ENCODE measurements at regions of chr1 and their contacts with region 1.

Region 1: GRCh38 chr1:93814059-93814794 is 64.8 kb downstream of the DNTTIP2 start:
- DNase-seq: peak; percentile 40
- ATAC-seq: peak; percentile 92
- H3K4me3 ChIP-seq: no peak overlapping the region
- H3K27ac ChIP-seq: no peak overlapping the region
- H3K4me1 ChIP-seq: peaks cover 8% of the 10 kb centered on the region
- H3K27me3 ChIP-seq: no peaks in the 10 kb centered on the region; a peak in 1 of 4 replicates
- CTCF ChIP-seq: peak; percentile 97 to 99 (median 97); a peak in 5 of 6 replicates
- EP300 ChIP-seq: no peak
- POLR2A ChIP-seq: no peak
- RAD21 ChIP-seq: peak; percentile 100

Region 2: DNA sequence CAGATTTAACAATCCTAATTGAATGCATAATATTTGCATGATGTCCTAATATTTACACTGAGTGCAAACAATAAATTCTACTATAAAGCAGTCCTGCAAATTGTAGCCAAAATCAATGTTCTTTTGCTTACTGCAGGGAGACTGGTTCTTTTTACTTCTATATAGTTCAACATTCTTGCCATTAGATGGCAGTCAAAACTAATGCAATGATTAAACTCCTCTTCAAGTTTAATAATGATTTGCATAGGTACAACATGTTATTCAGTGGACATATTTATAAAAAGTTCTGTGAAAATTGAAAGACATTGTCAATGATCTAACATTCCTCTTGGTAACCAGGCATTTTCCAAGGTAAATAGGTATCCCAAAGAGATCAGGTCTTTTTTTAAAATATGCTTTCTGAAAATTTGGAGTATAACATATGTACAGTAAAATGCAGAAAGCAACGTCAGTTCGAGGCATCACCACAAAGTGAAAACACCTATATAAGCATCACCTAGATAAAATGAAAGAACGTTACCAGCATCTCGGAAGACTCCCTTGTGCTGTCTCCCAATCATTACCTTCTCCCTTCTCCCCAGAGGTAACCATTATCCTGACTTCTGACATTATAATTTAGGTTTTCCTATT is 376.1 kb before region 1 on chr1:
- CTCF ChIA-PET with region 1: interaction called, 15 read pairs
- POLR2A ChIA-PET with region 1: no interaction called
- RAD21 ChIA-PET with region 1: interaction called, 3 read pairs
- SMC1A ChIA-PET with region 1: interaction called, 9 read pairs
- in situ Hi-C with region 1: no loop called
- intact Hi-C with region 1: loop called (anchors 2 kb)
- DNase-seq: no peak
- ATAC-seq: peak; percentile 74
- H3K4me3 ChIP-seq: no peak overlapping the region
- H3K27ac ChIP-seq: no peak overlapping the region
- H3K4me1 ChIP-seq: no peaks in the 10 kb centered on the region
- H3K27me3 ChIP-seq: peaks cover 0 to 2% of the 10 kb centered on the region in 2 experiments; a peak in 2 of 4 replicates
- CTCF ChIP-seq: peak; percentile 30 to 61 (median 46); a peak in 5 of 6 replicates
- EP300 ChIP-seq: no peak
- POLR2A ChIP-seq: no peak
- RAD21 ChIP-seq: peak; percentile 76

Region 3: GRCh38 chr1:93638981-93639380 is 175.2 kb before region 1 on chr1:
- CTCF ChIA-PET with region 1: interaction called, 555 read pairs
- POLR2A ChIA-PET with region 1: no interaction called
- RAD21 ChIA-PET with region 1: interaction called, 483 read pairs
- SMC1A ChIA-PET with region 1: interaction called, 505 read pairs
- in situ Hi-C with region 1: no loop called
- intact Hi-C with region 1: no loop called
- DNase-seq: no peak
- ATAC-seq: no peak
- H3K4me3 ChIP-seq: no peak overlapping the region
- H3K27ac ChIP-seq: no peak overlapping the region
- H3K4me1 ChIP-seq: 0 out of 2 replicates have a peak, but pooled peaks cover 3% of the 10 kb centered on the region
- H3K27me3 ChIP-seq: no peaks in the 10 kb centered on the region
- CTCF ChIP-seq: no peak
- EP300 ChIP-seq: no peak
- POLR2A ChIP-seq: no peak
- RAD21 ChIP-seq: no peak

Region 4: GRCh38 chr1:93686497-93687250 is 127.6 kb before region 1 on chr1:
- CTCF ChIA-PET with region 1: interaction called, 30 read pairs
- POLR2A ChIA-PET with region 1: interaction called, 3 read pairs
- RAD21 ChIA-PET with region 1: interaction called, 13 read pairs
- SMC1A ChIA-PET with region 1: interaction called, 14 read pairs
- in situ Hi-C with region 1: no loop called
- intact Hi-C with region 1: no loop called
- DNase-seq: no peak
- ATAC-seq: no peak
- H3K4me3 ChIP-seq: no peak overlapping the region
- H3K27ac ChIP-seq: no peak overlapping the region
- H3K4me1 ChIP-seq: peaks cover 16% of the 10 kb centered on the region
- H3K27me3 ChIP-seq: no peaks in the 10 kb centered on the region; a peak in 2 of 4 replicates
- CTCF ChIP-seq: no peak
- EP300 ChIP-seq: no peak
- POLR2A ChIP-seq: no peak
- RAD21 ChIP-seq: no peak

Region 5: DNA sequence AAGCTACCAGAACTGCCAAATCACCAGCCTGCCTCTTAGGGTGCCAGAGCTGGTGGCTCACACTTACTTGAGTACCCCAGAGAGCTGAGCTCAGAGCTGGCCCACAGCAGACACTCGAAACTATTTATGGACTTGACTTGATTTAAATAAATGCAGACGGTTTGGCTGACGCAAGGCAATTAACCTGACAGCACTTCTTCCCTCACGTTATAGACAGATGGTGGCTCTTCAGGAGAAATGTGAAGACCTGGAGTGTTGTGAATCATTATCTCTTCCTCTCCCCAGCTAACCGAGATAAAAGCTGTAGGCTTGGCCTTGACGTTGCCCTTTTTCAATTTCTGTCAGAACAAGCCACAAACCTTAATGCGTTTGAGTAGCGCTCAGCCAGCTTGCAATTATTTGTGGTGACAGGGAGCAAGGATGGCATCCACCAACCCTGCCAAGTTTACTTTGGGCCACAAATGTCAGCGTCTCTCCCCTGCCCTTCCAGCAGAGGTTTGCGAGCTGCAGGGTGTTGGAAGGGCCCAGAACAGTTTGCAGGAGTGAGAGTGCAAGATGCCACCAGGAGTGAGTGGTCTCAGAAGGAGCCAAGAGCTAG is 98.6 kb before region 1 on chr1:
- CTCF ChIA-PET with region 1: interaction called, 8 read pairs
- POLR2A ChIA-PET with region 1: no interaction called
- RAD21 ChIA-PET with region 1: interaction called, 18 read pairs
- SMC1A ChIA-PET with region 1: interaction called, 23 read pairs
- in situ Hi-C with region 1: no loop called
- intact Hi-C with region 1: no loop called
- DNase-seq: no peak
- ATAC-seq: peak; percentile 75
- H3K4me3 ChIP-seq: peak overlapping the region; percentile 5; the same call in 1 of the 2 replicates
- H3K27ac ChIP-seq: peak overlapping the region; percentile 54
- H3K4me1 ChIP-seq: peaks cover 40% of the 10 kb centered on the region
- H3K27me3 ChIP-seq: no peaks in the 10 kb centered on the region
- CTCF ChIP-seq: no peak
- EP300 ChIP-seq: peak in 1 of 2 experiments; percentile 57; a peak in 2 of 4 replicates
- POLR2A ChIP-seq: no peak
- RAD21 ChIP-seq: no peak

Region 6: GRCh38 chr1:93749894-93750301 is 64.3 kb before region 1 on chr1:
- CTCF ChIA-PET with region 1: interaction called, 26 read pairs
- POLR2A ChIA-PET with region 1: no interaction called
- RAD21 ChIA-PET with region 1: interaction called, 23 read pairs
- SMC1A ChIA-PET with region 1: interaction called, 18 read pairs
- in situ Hi-C with region 1: no loop called
- intact Hi-C with region 1: no loop called
- DNase-seq: no peak
- ATAC-seq: peak; percentile 56
- H3K4me3 ChIP-seq: no peak overlapping the region
- H3K27ac ChIP-seq: no peak overlapping the region
- H3K4me1 ChIP-seq: peaks cover 19% of the 10 kb centered on the region
- H3K27me3 ChIP-seq: no peaks in the 10 kb centered on the region
- CTCF ChIP-seq: peak in 2 of 3 experiments; percentile 9 to 41; a peak in 2 of 6 replicates
- EP300 ChIP-seq: no peak
- POLR2A ChIP-seq: no peak
- RAD21 ChIP-seq: peak; percentile 39; the same call in 1 of the 2 replicates

Region 7: DNA sequence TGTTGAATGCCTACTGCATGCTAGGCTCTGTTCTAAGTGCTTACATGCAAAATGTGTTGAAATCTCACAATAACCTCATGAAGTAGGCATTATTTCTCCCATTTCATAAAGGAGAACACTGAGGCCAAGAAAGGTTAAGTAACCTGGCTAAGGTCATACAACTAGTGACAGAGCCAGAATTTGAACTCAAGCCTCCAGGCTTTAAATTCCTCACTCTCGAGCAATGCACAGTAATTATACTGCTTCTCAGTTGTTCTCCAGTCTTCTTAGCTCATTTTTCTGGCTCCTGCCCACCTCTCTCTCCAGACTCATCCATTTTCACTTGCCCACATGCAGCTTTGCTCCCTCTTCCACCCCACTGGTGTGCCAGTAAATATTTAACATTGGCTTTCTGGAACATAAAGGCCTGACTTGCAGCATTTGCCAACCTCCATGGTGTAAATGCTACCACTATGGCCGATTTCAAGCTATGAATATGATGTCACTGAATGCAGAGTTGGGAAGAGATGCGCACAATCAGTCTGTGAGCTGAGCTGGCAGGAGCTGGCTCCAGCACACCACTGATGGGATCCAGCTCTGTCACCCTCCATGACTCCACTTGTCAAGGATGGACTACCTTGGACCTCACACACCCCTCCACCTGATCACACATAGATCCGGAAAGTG is 50.7 kb before region 1 on chr1:
- CTCF ChIA-PET with region 1: no interaction called
- POLR2A ChIA-PET with region 1: no interaction called
- RAD21 ChIA-PET with region 1: no interaction called
- SMC1A ChIA-PET with region 1: no interaction called
- in situ Hi-C with region 1: no loop called
- intact Hi-C with region 1: no loop called
- DNase-seq: no peak
- ATAC-seq: no peak
- H3K4me3 ChIP-seq: no peak overlapping the region
- H3K27ac ChIP-seq: no peak overlapping the region
- H3K4me1 ChIP-seq: no peaks in the 10 kb centered on the region; the same call in 1 of the 2 replicates
- H3K27me3 ChIP-seq: no peaks in the 10 kb centered on the region
- CTCF ChIP-seq: no peak
- EP300 ChIP-seq: no peak
- POLR2A ChIP-seq: no peak
- RAD21 ChIP-seq: no peak

Region 8: DNA sequence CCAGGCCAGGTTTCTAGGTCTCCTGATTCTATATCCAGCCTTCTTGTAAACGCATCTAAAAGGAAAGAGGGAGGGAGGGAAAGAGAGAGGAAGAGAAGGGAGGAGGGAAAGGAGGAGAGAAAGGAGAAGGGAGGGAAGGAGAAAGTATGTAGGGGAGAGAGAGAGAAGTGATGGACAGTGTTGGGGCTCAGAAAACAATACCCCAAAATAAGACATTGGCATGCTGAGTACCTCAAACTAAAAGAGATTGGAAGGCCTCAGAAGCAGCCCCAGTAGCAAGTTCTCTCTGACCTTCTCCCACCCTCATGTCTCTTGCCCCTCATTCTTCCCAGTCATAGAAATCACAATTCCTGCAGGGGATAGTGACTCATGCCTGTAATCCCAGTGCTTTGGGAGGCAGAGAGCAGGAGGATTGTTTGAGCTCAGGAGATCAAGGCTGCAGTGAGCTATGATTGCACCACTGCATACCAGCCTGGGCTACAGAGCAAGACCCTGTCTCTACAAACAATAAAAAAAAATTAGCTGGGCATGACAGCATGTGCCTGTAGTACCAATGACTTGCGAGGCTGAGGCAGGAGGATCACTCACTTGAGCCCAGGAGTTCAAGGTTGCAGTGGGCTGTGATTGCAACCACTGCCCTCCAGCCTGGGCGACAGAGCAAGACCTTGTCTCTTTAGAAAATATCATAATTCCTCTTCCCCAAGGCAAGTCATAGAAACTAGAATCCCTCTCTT is 13.6 kb after region 1 on chr1:
- CTCF ChIA-PET with region 1: interaction called, 4 read pairs
- POLR2A ChIA-PET with region 1: no interaction called
- RAD21 ChIA-PET with region 1: interaction called, 7 read pairs
- SMC1A ChIA-PET with region 1: interaction called, 12 read pairs
- in situ Hi-C with region 1: no loop called
- intact Hi-C with region 1: no loop called
- DNase-seq: no peak
- ATAC-seq: no peak
- H3K4me3 ChIP-seq: no peak overlapping the region
- H3K27ac ChIP-seq: no peak overlapping the region
- H3K4me1 ChIP-seq: no peaks in the 10 kb centered on the region
- H3K27me3 ChIP-seq: peaks cover 0 to 2% of the 10 kb centered on the region in 2 experiments; a peak in 2 of 4 replicates
- CTCF ChIP-seq: no peak
- EP300 ChIP-seq: no peak
- POLR2A ChIP-seq: no peak
- RAD21 ChIP-seq: no peak

Region 9: DNA sequence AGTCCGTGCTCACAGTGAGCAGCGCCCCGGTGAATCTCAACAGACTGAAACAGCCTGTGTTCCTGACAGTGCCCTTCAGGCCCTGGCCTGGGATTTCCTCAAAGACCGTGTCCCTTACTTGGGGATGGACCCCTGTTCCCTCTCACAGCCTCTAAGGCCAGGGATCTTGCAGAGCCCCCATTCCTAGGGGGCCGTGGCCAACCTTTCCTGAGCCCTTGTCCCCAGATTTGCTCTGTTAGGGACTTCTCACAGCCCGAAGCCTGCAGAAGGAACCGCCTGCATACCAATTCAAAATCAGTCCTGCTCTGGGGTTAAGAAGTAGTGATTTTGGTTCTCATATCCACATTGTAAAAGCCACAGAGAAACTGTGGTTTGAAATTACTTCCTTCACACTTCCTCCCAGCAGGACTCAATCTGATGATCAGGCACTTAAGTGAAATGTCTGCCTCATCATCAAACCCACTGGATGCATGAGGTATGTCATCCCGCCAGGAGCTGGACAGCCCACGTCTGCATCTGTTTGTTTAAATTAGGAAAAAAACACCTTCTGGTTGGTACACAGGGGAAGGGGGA is 291.8 kb after region 1 on chr1:
- CTCF ChIA-PET with region 1: no interaction called
- POLR2A ChIA-PET with region 1: no interaction called
- RAD21 ChIA-PET with region 1: no interaction called
- SMC1A ChIA-PET with region 1: no interaction called
- in situ Hi-C with region 1: no loop called
- intact Hi-C with region 1: no loop called
- DNase-seq: no peak
- ATAC-seq: peak; percentile 52
- H3K4me3 ChIP-seq: no peak overlapping the region
- H3K27ac ChIP-seq: no peak overlapping the region
- H3K4me1 ChIP-seq: peaks cover 7% of the 10 kb centered on the region
- H3K27me3 ChIP-seq: peaks cover 0 to 1% of the 10 kb centered on the region in 2 experiments; a peak in 2 of 4 replicates
- CTCF ChIP-seq: no peak
- EP300 ChIP-seq: no peak
- POLR2A ChIP-seq: no peak
- RAD21 ChIP-seq: no peak